Activated CD8-positive, alpha-beta T cell treated with anti-CD3 and anti-CD28 coated beads, Interleukin-2, amount 10 ng/mL, durations not matched to agents 7 days and 5 days (primary cell): ENCODE measurements at regions of chr9 and their contacts with region 1.

Region 1: GRCh38 chr9:84174486-84174885 is 166.1 kb downstream of the SLC28A3 start:
- DNase-seq: no peak
- ATAC-seq: no peak
- H3K4me3 Mint-ChIP-seq: no peak overlapping the region
- H3K27ac Mint-ChIP-seq: no peak overlapping the region
- H3K4me1 Mint-ChIP-seq: peaks cover 2% of the 10 kb centered on the region
- H3K27me3 Mint-ChIP-seq: no peaks in the 10 kb centered on the region

Region 2: DNA sequence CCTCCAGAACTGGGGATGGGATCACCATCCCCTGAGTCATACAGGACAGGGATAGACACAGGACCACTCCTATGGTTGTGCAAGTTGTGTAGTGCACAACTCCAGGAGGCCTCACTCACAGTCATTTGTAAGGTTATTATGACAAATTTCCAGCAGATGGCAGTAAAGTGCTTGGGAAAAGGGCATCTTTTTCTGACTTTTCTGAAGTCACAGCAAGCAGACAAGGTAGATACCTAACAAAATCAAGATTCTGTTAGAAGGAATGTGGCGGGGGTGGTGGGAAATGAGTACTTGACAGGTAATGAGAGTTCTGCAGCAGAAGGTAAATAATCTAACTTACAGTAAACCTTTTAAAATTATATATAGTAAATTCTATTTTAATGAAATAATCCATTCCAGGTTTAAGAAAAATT is 236.6 kb before region 1 on chr9:
- CTCF ChIA-PET with region 1: interaction called, 16 read pairs
- POLR2A ChIA-PET with region 1: no interaction called
- DNase-seq: peak; percentile 53
- ATAC-seq: peak; percentile 74
- H3K4me3 Mint-ChIP-seq: no peak overlapping the region
- H3K27ac Mint-ChIP-seq: no peak overlapping the region
- H3K4me1 Mint-ChIP-seq: no peaks in the 10 kb centered on the region
- H3K27me3 Mint-ChIP-seq: no peaks in the 10 kb centered on the region

Region 3: DNA sequence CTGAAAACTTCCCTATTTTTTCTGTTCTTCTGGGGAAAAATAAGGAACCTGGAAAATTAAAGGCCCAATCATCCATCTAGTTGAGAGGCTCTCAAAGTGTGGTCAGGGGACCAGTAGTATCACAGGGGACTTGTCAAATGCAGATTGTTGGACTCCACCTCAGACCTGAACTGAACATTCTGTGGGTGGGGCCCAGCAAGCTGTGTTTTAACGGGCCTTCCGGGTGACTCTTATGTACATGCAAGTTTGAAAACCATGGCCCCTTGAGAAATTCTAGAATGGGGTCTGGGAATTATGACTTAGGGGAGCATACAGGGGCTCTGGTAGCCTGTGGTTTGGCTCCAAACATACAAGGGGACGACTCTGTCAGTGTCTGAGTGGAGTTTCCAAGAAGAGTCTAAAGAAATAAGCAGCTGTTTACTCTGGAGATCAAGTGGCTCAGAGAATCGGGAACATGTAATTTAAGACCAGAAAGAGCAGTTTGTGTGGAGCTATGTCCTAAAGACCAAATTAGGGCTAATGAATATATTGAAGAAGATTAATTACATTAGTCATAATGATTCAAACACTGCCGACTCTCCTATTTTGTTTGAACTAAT is 11.3 kb before region 1 on chr9:
- CTCF ChIA-PET with region 1: interaction called, 21 read pairs
- POLR2A ChIA-PET with region 1: no interaction called
- DNase-seq: no peak
- ATAC-seq: no peak
- H3K4me3 Mint-ChIP-seq: no peak overlapping the region
- H3K27ac Mint-ChIP-seq: no peak overlapping the region
- H3K4me1 Mint-ChIP-seq: no peaks in the 10 kb centered on the region
- H3K27me3 Mint-ChIP-seq: peaks cover 24% of the 10 kb centered on the region

Region 4: GRCh38 chr9:84187090-84187489 is 12.6 kb after region 1 on chr9:
- CTCF ChIA-PET with region 1: interaction called, 11 read pairs
- POLR2A ChIA-PET with region 1: no interaction called
- DNase-seq: no peak
- ATAC-seq: no peak
- H3K4me3 Mint-ChIP-seq: no peak overlapping the region
- H3K27ac Mint-ChIP-seq: no peak overlapping the region
- H3K4me1 Mint-ChIP-seq: no peaks in the 10 kb centered on the region
- H3K27me3 Mint-ChIP-seq: peaks cover 8% of the 10 kb centered on the region